HepG2 (cell line): ENCODE measurements at regions of chr17 and their contacts with region 1.

Region 1: GRCh38 chr17:75012346-75013091 is at the start of gene MRPL58:
- DNase-seq: peak; percentile 88
- ATAC-seq: peak; percentile 91
- H3K4me3 ChIP-seq: peak within 1 kb of the TSS; percentile 71 to 96 (median 85)
- H3K27ac ChIP-seq: peak within 1 kb of the TSS; percentile 85
- H3K4me1 ChIP-seq: peaks cover 28% of the 10 kb centered on the region
- H3K27me3 ChIP-seq: no peaks in the 10 kb centered on the region; a peak in 2 of 5 replicates
- CTCF ChIP-seq: peak; percentile 74
- EP300 ChIP-seq: peak; percentile 48 to 72; a peak in 3 of 4 replicates
- POLR2A ChIP-seq: peak; percentile 81 to 89; a peak in 3 of 4 replicates
- RAD21 ChIP-seq: peak; percentile 80
- total RNA-seq, gene MRPL58: 68.9 and 101 TPM in 2 replicates

Region 2: GRCh38 chr17:74961657-74962490 is 50.6 kb before region 1 on chr17:
- CTCF ChIA-PET with region 1: interaction called, 44 read pairs
- POLR2A ChIA-PET with region 1: interaction called, 94 read pairs
- in situ Hi-C with region 1: loop called (anchors 5 kb)
- intact Hi-C with region 1: no loop called
- DNase-seq: peak; percentile 85
- ATAC-seq: peak; percentile 70
- H3K4me3 ChIP-seq: no peak overlapping the region
- H3K27ac ChIP-seq: no peak overlapping the region
- H3K4me1 ChIP-seq: peaks cover 6% of the 10 kb centered on the region; the same call in 1 of the 2 replicates
- H3K27me3 ChIP-seq: no peaks in the 10 kb centered on the region; a peak in 2 of 5 replicates
- CTCF ChIP-seq: peak; percentile 93
- EP300 ChIP-seq: no peak
- POLR2A ChIP-seq: no peak
- RAD21 ChIP-seq: peak; percentile 95

Region 3: DNA sequence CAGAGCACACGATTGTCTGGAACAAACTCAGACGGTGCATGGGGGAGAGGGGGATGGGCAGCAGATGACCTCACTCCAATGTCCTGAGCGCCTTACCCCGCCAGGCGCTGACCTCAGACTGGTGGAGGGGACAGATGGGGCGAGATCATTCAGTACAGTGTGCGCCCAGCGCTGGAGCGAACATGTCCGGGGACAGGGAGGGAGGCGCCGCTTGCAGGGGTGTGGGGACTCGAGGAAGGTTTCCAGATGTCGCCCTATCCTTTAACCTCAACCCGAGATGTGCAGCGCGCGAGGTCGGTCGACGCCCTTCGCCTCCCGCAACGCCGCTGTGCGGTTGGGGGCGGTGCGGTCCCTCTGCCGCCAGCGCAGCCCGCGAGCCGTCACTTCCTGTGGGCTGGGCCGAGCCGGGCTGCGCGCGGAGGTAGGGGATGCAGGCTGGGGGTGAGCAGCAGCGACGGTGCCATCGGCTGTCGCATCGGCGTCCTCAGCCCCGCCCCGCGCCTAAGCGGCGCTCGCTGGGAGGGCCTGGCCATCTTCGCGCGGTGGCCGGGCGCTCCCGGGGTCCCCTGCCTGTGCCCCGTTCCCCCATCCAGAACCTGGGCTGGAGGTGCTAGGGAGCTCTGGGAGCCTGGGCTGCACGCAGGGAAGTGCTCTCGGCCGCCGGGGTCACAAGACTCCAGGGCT is 30.4 kb before region 1 on chr17:
- CTCF ChIA-PET with region 1: no interaction called
- POLR2A ChIA-PET with region 1: interaction called, 50 read pairs
- in situ Hi-C with region 1: no loop called
- intact Hi-C with region 1: no loop called
- DNase-seq: peak; percentile 72
- ATAC-seq: peak; percentile 97
- H3K4me3 ChIP-seq: peak overlapping the region; percentile 72 to 88 (median 76)
- H3K27ac ChIP-seq: peak overlapping the region; percentile 29
- H3K4me1 ChIP-seq: peaks cover 32% of the 10 kb centered on the region
- H3K27me3 ChIP-seq: peaks cover 0 to 16% of the 10 kb centered on the region in 2 experiments; a peak in 3 of 5 replicates
- CTCF ChIP-seq: peak; percentile 62
- EP300 ChIP-seq: no peak; a peak in 1 of 4 replicates
- POLR2A ChIP-seq: peak; percentile 74 to 95
- RAD21 ChIP-seq: peak; percentile 71

Region 4: DNA sequence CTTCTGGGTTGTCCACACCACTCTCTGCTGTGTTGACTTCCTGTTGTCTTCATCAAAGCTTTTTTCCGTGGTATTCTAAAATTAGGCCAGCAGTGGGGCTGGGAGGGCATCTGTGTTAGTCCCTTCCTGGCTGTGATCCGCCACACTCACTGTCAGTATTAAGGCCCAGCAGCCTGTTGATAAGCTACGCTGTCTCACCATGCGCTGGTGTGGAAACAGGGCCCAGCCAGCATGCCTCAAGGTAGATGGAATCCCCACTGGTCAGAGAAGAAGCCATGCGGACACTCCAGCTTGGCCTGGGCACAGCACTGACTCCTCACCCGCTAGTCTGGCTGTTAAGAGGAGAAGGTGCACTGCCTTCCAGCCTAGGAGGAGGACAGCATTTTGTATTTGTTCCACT is 13.7 kb before region 1 on chr17:
- CTCF ChIA-PET with region 1: no interaction called
- POLR2A ChIA-PET with region 1: interaction called, 13 read pairs
- in situ Hi-C with region 1: no loop called
- intact Hi-C with region 1: no loop called
- DNase-seq: no peak
- ATAC-seq: no peak
- H3K4me3 ChIP-seq: no peak overlapping the region
- H3K27ac ChIP-seq: no peak overlapping the region
- H3K4me1 ChIP-seq: peaks cover 14% of the 10 kb centered on the region
- H3K27me3 ChIP-seq: no peaks in the 10 kb centered on the region
- CTCF ChIP-seq: no peak
- EP300 ChIP-seq: no peak
- POLR2A ChIP-seq: no peak
- RAD21 ChIP-seq: no peak

Region 5: DNA sequence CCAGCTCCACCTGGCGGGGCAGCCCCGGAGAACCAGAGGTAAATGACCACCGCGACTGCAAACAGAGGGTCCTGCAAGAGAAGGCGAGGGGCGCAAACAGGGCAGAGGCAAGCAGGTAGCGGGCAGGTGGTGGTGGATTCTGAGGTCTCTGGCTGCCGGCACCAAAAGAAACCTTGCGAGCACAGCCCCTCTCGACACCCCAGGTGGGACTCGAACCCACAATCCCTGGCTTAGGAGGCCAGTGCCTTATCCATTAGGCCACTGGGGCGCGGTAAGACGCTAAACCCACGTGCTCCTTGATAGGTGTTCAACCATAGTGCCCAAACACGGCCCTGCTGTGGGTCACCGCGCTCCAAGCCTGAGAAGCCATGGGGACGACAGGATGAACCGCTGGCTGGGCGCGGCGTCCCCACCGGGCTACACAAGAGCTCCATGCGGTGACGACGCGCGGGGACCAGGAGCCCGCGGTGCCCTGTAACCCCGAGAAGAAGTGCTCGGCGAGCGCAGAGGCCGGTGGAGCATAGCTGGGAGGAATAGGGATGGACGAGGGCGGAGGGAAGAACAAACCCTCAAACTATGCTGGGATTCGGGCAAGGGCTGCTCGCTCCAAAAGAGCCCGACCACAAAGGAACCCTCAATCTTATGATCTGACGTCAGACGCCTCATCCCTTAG is 21.9 kb after region 1 on chr17:
- CTCF ChIA-PET with region 1: no interaction called
- POLR2A ChIA-PET with region 1: interaction called, 77 read pairs
- in situ Hi-C with region 1: no loop called
- intact Hi-C with region 1: loop called (anchors 1 kb)
- DNase-seq: peak; percentile 94
- ATAC-seq: peak; percentile 58
- H3K4me3 ChIP-seq: peak overlapping the region; percentile 76 to 93 (median 91)
- H3K27ac ChIP-seq: peak overlapping the region; percentile 94
- H3K4me1 ChIP-seq: peaks cover 37% of the 10 kb centered on the region
- H3K27me3 ChIP-seq: peaks cover 0 to 6% of the 10 kb centered on the region in 2 experiments; a peak in 3 of 5 replicates
- CTCF ChIP-seq: peak; percentile 48
- EP300 ChIP-seq: no peak
- POLR2A ChIP-seq: no peak
- RAD21 ChIP-seq: no peak

Region 6: GRCh38 chr17:75087558-75088453 is 75.3 kb after region 1 on chr17 and contains the start of gene SLC16A5:
- CTCF ChIA-PET with region 1: no interaction called
- POLR2A ChIA-PET with region 1: interaction called, 11 read pairs
- in situ Hi-C with region 1: no loop called
- intact Hi-C with region 1: no loop called
- DNase-seq: peak; percentile 91
- ATAC-seq: peak; percentile 63
- H3K4me3 ChIP-seq: peak within 1 kb of the TSS; percentile 57 to 76 (median 68)
- H3K27ac ChIP-seq: peak within 1 kb of the TSS; percentile 63
- H3K4me1 ChIP-seq: peaks cover 97% of the 10 kb centered on the region
- H3K27me3 ChIP-seq: 0 out of 5 replicates have a peak, but pooled peaks cover 0 to 11% of the 10 kb centered on the region in 2 experiments
- CTCF ChIP-seq: no peak
- EP300 ChIP-seq: peak in 1 of 2 experiments; percentile 19; a peak in 1 of 4 replicates
- POLR2A ChIP-seq: no peak; a peak in 1 of 4 replicates
- RAD21 ChIP-seq: peak; percentile 22
- total RNA-seq, gene SLC16A5: 0.42 and 0.69 TPM in 2 replicates